Sigmoid colon (tissue), 7 donors: ENCODE measurements at regions of chr4 and their contacts with region 1.

Region 1: DNA sequence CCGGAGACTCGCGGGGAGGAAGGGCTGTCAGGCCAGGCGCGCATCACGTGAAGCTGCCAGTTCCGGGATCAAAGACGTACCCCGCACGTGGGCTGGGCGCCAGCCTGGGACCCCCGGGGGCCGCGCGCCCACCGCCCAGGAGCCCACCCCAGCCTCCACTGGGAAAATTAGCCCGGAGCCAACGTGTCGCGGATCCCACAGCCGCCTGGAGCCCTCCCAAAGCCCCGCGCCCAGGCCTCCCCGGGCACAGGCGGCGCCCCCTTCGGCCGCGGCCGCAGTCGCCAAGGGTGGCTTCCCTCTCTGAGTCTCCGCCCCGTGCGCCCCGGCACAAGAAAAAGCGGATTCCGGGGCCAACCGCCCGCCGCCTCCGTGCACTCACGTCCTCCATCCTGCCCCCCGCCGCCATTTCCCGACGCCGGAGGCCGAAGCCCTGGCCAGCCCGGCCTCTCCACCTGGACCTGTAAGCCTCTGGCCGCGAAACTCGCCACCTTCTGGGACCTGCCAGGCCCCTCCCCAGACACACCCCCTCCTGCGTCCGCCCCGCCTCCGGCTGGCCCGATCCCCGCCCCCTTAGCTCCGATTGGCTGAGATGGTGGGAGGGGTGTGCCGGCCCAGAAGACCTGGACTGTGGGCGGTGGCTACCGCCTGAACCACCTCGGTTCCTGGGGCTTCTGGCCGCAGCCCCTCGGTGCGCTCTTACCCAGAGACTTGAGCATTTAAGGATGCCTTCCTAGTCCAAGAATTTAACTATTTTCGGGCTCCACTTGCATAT is at the start of gene TMEM192:
- DNase-seq: peak; percentile 96
- H3K4me3 ChIP-seq: peak within 1 kb of the TSS; percentile 76 to 98 (median 86)
- H3K27ac ChIP-seq: peak within 1 kb of the TSS; percentile 82 to 92 (median 88)
- H3K4me1 ChIP-seq: peaks cover 0 to 13% (median 6%) of the 10 kb centered on the region in 4 donors
- H3K27me3 ChIP-seq: no peaks in the 10 kb centered on the region
- CTCF ChIP-seq: no peak
- EP300 ChIP-seq: no peak
- POLR2A ChIP-seq: peak; percentile 28 to 70
- total RNA-seq, gene TMEM192: 4.7 to 12.5 (median 9.1) TPM

Region 2: DNA sequence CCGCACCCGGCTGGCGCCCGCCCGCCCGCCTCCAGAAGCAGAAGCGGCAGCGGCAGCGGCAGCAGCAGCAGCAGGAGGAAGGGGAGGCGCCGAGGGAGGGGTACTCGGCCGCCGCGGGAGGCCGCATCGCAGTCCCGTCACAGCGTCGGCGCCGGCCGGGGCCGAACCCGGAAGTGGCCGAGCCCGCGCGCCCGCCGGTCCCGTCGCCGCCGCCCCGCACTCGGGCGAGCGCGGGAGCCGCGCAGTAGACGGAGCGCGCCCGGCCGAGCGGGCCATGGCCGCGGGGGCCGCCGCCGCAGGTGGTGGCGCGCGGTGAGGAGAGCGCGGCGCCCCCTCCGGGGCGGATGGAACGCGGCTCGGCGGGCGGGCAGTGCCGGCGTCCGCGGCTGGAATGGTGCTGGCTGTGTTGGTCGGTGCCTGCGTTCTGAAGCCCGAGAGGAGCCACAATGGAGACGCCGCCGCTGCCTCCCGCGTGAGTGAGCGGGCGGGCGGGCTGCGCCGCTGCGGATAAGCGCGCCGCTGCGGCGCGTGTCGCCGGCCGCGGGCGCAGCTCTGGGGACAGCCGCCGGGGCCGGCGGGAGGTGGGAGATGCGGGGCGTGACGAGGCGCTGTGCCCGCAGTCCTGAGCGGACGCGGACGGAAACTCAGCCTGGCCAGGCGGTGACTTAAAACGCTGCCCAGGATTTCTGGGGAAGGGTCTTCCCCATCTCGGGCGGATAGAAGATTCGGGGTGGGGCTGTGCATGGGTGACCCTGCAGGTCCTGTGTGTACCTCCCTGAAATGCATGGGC is 95.1 kb after region 1 on chr4 and contains the start of gene KLHL2:
- intact Hi-C with region 1: loop called (anchors 5 kb)
- DNase-seq: peak; percentile 88
- H3K4me3 ChIP-seq: peak within 1 kb of the TSS; percentile 47 to 97 (median 93)
- H3K27ac ChIP-seq: peak within 1 kb of the TSS; percentile 81 to 93 (median 88)
- H3K4me1 ChIP-seq: peaks cover 0 to 25% (median 22%) of the 10 kb centered on the region in 4 donors
- H3K27me3 ChIP-seq: no peaks in the 10 kb centered on the region
- CTCF ChIP-seq: no peak
- EP300 ChIP-seq: no peak
- POLR2A ChIP-seq: no peak
- total RNA-seq, gene KLHL2: 14.4 to 25.7 (median 18.8) TPM

Region 3: GRCh38 chr4:165327211-165328100 is 214.9 kb after region 1 on chr4 and contains the start of gene MSMO1:
- intact Hi-C with region 1: loop called (anchors 2 kb)
- DNase-seq: peak; percentile 99
- H3K4me3 ChIP-seq: peak within 1 kb of the TSS; percentile 78 to 98 (median 92)
- H3K27ac ChIP-seq: peak within 1 kb of the TSS; percentile 79 to 84 (median 82)
- H3K4me1 ChIP-seq: peaks cover 4 to 20% (median 14%) of the 10 kb centered on the region in 4 donors
- H3K27me3 ChIP-seq: no peaks in the 10 kb centered on the region
- CTCF ChIP-seq: no peak
- EP300 ChIP-seq: no peak
- POLR2A ChIP-seq: peak; percentile 27 to 70
- total RNA-seq, gene MSMO1: 13.6 to 26.8 (median 17.1) TPM